ENCODE measurements at regions of chr14 and their contacts with region 1.

Region 1: DNA sequence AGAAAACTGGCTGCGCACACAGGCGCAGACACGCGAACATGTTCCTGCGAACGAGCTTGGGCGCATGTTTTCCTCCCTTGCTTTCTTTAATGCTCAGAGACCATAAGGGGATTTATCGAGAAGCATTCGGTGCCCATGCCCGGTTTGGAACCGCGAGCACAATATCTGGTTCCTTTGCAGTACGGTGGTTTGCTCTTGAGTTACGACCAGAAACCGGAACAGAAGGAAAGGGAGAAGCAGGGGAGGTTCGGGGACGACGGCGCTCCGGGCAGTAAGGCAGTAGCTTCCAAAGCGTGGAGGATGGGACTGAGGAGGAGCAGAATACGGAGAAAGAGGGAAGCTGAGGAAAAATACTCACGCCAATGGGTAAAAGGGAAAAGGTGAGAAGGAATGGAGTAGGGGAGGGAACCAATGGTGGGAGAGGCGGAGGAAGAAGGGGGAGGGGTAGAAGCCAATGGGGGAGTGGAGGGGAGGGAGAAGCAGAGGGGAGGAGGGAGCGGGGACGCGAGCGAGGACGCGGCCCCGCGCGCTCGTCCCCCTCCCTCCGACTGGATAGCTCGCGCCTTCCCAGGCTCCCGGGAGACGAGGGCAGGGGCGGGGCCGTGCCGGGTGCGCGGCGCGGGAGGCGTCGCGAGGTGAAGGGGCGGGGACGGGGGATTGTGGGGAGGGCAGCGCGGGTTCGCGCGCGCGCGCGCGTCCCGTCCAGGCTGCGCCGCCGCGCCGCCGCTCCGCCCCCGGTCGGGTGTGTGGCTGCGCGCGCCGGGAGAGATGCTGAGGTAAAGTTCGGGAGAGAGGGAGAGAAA is 625 bp upstream of the ARHGAP5 start:
- DNase-seq: peak; percentile 28
- ATAC-seq: peak; percentile 65
- H3K4me3 ChIP-seq: peak overlapping the region; percentile 95
- H3K27ac ChIP-seq: no peak overlapping the region
- H3K4me1 ChIP-seq: no peaks in the 10 kb centered on the region
- H3K27me3 ChIP-seq: no peaks in the 10 kb centered on the region
- CTCF ChIP-seq: no peak
- EP300 ChIP-seq: no peak
- POLR2A ChIP-seq: no peak
- RAD21 ChIP-seq: no peak

Region 2: GRCh38 chr14:31456841-31457664 is 619.4 kb before region 1 on chr14 and contains the start of gene DTD2:
- CTCF ChIA-PET with region 1: interaction called, 4 read pairs
- POLR2A ChIA-PET with region 1: no interaction called
- RAD21 ChIA-PET with region 1: no interaction called
- SMC1A ChIA-PET with region 1: no interaction called
- in situ Hi-C with region 1: no loop called
- intact Hi-C with region 1: loop called (anchors 10 kb)
- DNase-seq: peak; percentile 74
- ATAC-seq: peak; percentile 99
- H3K4me3 ChIP-seq: peak within 1 kb of the TSS; percentile 82
- H3K27ac ChIP-seq: peak within 1 kb of the TSS; percentile 76
- H3K4me1 ChIP-seq: no peaks in the 10 kb centered on the region; the same call in 1 of the 2 replicates
- H3K27me3 ChIP-seq: no peaks in the 10 kb centered on the region
- CTCF ChIP-seq: peak in 1 of 3 experiments; percentile 5; a peak in 1 of 6 replicates
- EP300 ChIP-seq: no peak
- POLR2A ChIP-seq: peak; percentile 95
- RAD21 ChIP-seq: no peak
- polyA plus RNA-seq, gene DTD2: 4.5 to 5.4 TPM

Region 3: GRCh38 chr14:31770271-31770670 is 306.2 kb before region 1 on chr14:
- CTCF ChIA-PET with region 1: no interaction called
- POLR2A ChIA-PET with region 1: no interaction called
- RAD21 ChIA-PET with region 1: no interaction called
- SMC1A ChIA-PET with region 1: no interaction called
- in situ Hi-C with region 1: no loop called
- intact Hi-C with region 1: no loop called
- DNase-seq: no peak
- ATAC-seq: no peak
- H3K4me3 ChIP-seq: no peak overlapping the region
- H3K27ac ChIP-seq: no peak overlapping the region
- H3K4me1 ChIP-seq: no peaks in the 10 kb centered on the region
- H3K27me3 ChIP-seq: no peaks in the 10 kb centered on the region
- CTCF ChIP-seq: no peak
- EP300 ChIP-seq: no peak
- POLR2A ChIP-seq: no peak
- RAD21 ChIP-seq: no peak

Region 4: DNA sequence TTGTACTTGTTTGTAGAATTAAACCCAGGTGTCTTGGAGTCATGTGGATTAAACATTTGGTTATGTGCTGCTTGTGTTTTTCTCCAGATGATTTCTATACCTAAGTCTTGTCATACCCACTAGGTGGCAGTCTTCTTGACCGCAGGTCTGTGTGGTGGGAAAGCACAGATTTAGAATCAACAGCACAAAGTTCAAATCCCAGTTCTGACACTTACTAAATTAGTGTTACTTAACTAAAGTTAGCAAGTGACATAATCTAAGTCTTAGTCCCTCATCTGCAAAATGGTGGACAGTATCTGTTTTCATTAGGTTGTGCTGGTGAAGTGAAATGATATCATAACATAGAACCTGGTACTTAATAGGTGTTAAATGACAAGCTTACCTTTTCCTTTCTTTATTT is 150.4 kb before region 1 on chr14:
- CTCF ChIA-PET with region 1: interaction called, 21 read pairs
- POLR2A ChIA-PET with region 1: no interaction called
- RAD21 ChIA-PET with region 1: interaction called, 4 read pairs
- SMC1A ChIA-PET with region 1: interaction called, 4 read pairs
- in situ Hi-C with region 1: no loop called
- intact Hi-C with region 1: loop called (anchors 2 kb)
- DNase-seq: no peak
- ATAC-seq: peak; percentile 83
- H3K4me3 ChIP-seq: no peak overlapping the region
- H3K27ac ChIP-seq: no peak overlapping the region
- H3K4me1 ChIP-seq: no peaks in the 10 kb centered on the region
- H3K27me3 ChIP-seq: no peaks in the 10 kb centered on the region
- CTCF ChIP-seq: peak; percentile 61 to 65 (median 64)
- EP300 ChIP-seq: no peak
- POLR2A ChIP-seq: no peak
- RAD21 ChIP-seq: peak; percentile 63

Region 5: GRCh38 chr14:32244404-32244803 is 167.9 kb after region 1 on chr14:
- CTCF ChIA-PET with region 1: interaction called, 300 read pairs
- POLR2A ChIA-PET with region 1: no interaction called
- RAD21 ChIA-PET with region 1: interaction called, 4 read pairs
- SMC1A ChIA-PET with region 1: interaction called, 154 read pairs
- in situ Hi-C with region 1: no loop called
- intact Hi-C with region 1: no loop called
- DNase-seq: no peak
- ATAC-seq: peak; percentile 79
- H3K4me3 ChIP-seq: no peak overlapping the region
- H3K27ac ChIP-seq: no peak overlapping the region
- H3K4me1 ChIP-seq: no peaks in the 10 kb centered on the region
- H3K27me3 ChIP-seq: no peaks in the 10 kb centered on the region
- CTCF ChIP-seq: peak in 2 of 3 experiments; percentile 21 to 43; a peak in 2 of 6 replicates
- EP300 ChIP-seq: no peak
- POLR2A ChIP-seq: no peak
- RAD21 ChIP-seq: peak; percentile 55

Region 6: DNA sequence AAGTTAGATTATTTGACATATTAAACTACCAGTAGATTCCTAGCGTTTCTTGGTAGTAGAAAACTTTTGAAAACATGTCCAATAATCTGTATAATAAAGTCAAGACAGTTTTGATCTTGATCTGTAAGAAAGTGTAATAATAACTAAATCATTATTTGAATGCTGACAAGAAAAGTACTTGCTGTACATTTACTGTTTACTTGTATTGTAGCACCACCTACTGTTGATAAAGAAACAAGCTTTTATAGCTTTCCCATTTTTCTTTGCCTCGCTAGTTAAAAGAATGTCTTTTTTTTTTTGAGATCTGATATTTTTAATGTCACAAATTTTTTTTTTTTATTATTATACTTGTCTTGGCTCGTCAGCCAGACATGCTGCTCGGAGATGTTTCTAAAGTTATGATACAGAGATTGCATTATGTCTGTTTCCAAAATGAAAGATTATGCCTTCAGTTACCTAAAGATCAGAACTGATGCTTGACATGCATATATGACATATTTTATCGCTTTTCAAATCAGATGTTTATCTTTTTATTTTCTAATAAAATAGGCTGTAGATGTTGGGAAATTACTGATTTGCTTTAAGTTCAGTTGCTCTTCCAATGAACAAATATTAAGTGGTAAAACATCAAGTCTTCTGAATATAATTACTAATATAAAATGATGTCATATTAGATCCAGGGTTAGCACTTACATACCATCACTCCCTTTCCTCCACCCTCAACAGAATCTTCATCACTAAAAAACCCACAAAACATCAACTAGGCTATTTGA is 393.1 kb after region 1 on chr14:
- CTCF ChIA-PET with region 1: interaction called, 3 read pairs
- POLR2A ChIA-PET with region 1: no interaction called
- RAD21 ChIA-PET with region 1: interaction called, 4 read pairs
- SMC1A ChIA-PET with region 1: no interaction called
- in situ Hi-C with region 1: no loop called
- intact Hi-C with region 1: loop called (anchors 10 kb)
- DNase-seq: no peak
- ATAC-seq: peak; percentile 51
- H3K4me3 ChIP-seq: no peak overlapping the region
- H3K27ac ChIP-seq: no peak overlapping the region
- H3K4me1 ChIP-seq: no peaks in the 10 kb centered on the region
- H3K27me3 ChIP-seq: no peaks in the 10 kb centered on the region
- CTCF ChIP-seq: peak; percentile 29 to 56 (median 31); a peak in 3 of 6 replicates
- EP300 ChIP-seq: no peak
- POLR2A ChIP-seq: no peak
- RAD21 ChIP-seq: peak; percentile 68

Measured in GM12878 (cell line).